Common myeloid progenitor, CD34-positive (primary cell): ENCODE measurements at regions of chr6 and their contacts with region 1.

Region 1: DNA sequence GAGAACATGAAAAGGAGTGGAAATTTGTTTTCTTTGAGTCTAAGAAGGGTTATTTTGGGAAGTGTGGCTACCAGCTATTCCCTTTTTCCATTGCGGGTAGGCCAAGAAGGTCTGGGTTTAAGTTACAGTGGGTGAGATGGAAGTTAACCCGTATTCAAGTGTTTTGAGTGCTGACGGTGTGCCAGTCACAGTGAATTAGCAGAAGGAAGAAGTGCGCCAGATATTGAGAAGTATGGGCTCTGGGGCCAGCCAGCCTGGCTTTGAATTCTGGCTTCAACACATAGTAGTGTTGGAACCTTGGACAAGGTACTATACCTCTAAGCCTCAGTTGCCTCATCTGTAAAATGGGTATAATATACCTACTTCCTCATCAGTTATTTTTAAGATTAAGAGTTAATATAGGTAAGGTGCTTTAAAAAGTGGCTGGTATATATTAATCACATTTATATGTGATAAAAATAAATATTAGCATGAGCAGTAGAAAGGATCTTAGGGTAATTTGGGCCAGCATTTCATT is 16.3 kb downstream of the ZNF76 start:
- DNase-seq: peak in 2 of 3 donors; percentile 37 to 44
- H3K4me3 ChIP-seq: no peak overlapping the region
- H3K27ac ChIP-seq: no peak overlapping the region
- H3K4me1 ChIP-seq: peaks cover 0 to 9% (median 4%) of the 10 kb centered on the region in 4 experiments
- H3K27me3 ChIP-seq: no peaks in the 10 kb centered on the region

Region 2: DNA sequence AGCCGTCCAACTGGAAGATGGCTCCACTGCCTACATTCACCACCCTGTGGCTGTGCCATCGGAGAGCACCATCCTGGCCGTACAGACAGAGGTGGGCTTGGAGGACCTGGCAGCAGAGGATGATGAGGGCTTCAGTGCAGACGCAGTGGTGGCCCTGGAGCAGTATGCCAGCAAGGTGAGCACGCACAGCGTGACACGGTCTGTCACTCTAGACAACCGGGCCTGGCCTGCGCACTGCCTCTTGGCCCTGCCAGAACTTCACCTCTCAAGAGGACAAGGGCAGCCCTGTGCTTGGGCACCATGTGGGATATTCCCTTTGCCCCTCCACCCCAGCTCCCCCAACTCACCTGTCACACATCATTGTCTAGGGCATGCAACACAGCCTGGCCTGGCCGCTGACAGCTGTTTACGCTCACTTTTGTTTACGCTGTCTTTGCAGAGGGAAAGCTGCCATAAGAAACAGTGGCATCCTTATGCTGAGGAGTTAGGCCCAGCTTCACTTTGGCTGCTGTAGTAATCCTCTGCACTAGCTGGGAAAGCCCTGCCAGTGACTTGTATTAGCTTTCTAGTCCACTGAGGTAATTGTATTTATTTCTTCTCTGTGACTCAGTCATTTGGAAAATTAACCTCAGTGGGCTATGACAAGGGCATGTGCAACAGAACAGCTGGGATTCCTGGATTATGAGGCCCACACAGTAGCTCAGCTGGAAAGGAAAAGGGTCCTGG is 12.0 kb after region 1 on chr6:
- CTCF ChIA-PET with region 1: interaction called, 11 read pairs
- POLR2A ChIA-PET with region 1: no interaction called
- DNase-seq: no peak
- H3K4me3 ChIP-seq: no peak overlapping the region
- H3K27ac ChIP-seq: no peak overlapping the region
- H3K4me1 ChIP-seq: no peaks in the 10 kb centered on the region
- H3K27me3 ChIP-seq: no peaks in the 10 kb centered on the region